ENCODE measurements at regions of chr2 and their contacts with region 1.

Region 1: GRCh38 chr2:9984217-9984739 is 32.8 kb downstream of the GRHL1 start:
- DNase-seq: no peak
- H3K4me3 Mint-ChIP-seq: no peak overlapping the region
- H3K27ac Mint-ChIP-seq: no peak overlapping the region
- H3K4me1 Mint-ChIP-seq: peaks cover 16% of the 10 kb centered on the region
- H3K27me3 Mint-ChIP-seq: peaks cover 13% of the 10 kb centered on the region

Region 2: GRCh38 chr2:9799665-9800632 is 184.3 kb before region 1 on chr2:
- CTCF ChIA-PET with region 1: interaction called, 13 read pairs
- POLR2A ChIA-PET with region 1: no interaction called
- DNase-seq: peak; percentile 92
- H3K4me3 Mint-ChIP-seq: peak overlapping the region; percentile 72
- H3K27ac Mint-ChIP-seq: peak overlapping the region; percentile 98
- H3K4me1 Mint-ChIP-seq: peaks cover 49% of the 10 kb centered on the region
- H3K27me3 Mint-ChIP-seq: no peaks in the 10 kb centered on the region

Region 3: DNA sequence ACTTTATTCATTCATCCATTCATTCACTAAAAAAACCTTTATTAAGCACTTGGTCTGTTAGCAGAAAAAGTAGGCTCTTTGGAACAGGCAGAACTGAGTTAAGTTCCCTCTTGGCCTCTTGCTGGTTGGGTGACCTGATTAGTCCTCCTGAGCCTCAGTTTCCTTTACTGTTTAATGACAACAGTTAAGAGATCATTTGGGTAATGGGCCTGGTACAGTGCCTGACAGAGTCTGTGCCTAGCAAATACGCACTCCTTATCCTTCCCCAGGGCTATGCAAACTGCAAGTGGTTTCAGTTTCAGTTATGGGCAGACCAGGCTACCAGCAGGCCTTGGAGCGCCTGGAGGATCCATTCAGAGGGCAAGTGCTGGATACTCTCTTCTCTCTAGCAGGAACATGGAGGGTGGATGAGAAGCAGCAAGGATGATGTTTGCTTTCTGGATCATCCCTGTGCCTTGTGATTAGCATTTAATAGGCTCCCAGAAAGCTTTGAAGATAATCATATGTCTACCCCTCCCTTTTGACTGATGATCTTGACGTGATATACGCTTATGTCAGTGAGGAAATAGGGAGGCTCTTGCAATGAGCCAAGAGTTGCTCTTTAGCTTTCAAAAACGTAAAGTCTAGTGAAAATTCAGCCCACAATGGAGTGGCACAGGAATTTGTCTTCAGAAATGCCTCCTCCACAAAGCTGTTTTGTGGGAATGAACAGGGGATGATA is 153.4 kb before region 1 on chr2:
- CTCF ChIA-PET with region 1: no interaction called
- POLR2A ChIA-PET with region 1: no interaction called
- DNase-seq: peak; percentile 37
- H3K4me3 Mint-ChIP-seq: no peak overlapping the region
- H3K27ac Mint-ChIP-seq: peak overlapping the region; percentile 22
- H3K4me1 Mint-ChIP-seq: peaks cover 38% of the 10 kb centered on the region
- H3K27me3 Mint-ChIP-seq: peaks cover 28% of the 10 kb centered on the region

Region 4: DNA sequence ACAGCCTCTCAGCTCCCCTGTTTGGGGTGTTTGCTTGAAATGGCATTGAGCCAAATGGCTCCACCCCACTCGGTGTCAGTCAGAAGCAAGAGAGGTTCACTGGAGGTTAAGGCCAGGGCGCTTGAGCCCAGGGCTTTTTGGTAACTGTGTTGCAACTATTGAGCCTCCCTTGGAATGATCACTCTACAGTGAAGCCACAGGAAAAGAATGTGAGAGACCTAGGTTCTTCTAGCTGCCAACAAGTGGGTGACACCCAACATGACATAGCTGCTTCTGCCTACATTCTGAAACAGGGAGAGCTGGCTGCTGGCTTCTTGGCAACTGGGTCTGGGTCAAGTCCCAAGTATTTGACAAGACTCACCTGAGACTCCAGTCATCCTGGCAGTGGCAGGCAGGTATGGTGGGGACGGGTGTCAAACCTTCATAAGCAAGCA is 39.9 kb before region 1 on chr2:
- CTCF ChIA-PET with region 1: interaction called, 15 read pairs
- POLR2A ChIA-PET with region 1: no interaction called
- DNase-seq: no peak
- H3K4me3 Mint-ChIP-seq: no peak overlapping the region
- H3K27ac Mint-ChIP-seq: no peak overlapping the region
- H3K4me1 Mint-ChIP-seq: peaks cover 5% of the 10 kb centered on the region
- H3K27me3 Mint-ChIP-seq: peaks cover 37% of the 10 kb centered on the region

Region 5: DNA sequence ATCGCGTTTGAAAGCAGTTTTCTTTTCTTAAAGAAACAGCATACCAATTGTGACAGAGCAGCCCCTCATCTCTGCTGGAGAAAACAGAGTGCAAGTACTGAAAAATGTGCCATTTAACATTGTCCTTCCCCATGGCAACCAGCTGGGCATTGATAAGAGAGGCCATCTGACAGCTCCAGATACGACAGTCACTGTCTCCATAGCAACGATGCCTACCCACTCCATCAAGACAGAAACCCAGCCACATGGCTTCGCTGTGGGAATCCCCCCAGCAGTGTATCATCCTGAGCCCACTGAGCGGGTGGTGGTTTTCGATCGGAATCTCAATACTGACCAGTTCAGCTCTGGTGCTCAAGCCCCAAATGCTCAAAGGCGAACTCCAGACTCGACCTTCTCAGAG is 23.3 kb before region 1 on chr2:
- CTCF ChIA-PET with region 1: interaction called, 28 read pairs
- POLR2A ChIA-PET with region 1: no interaction called
- DNase-seq: no peak
- H3K4me3 Mint-ChIP-seq: no peak overlapping the region
- H3K27ac Mint-ChIP-seq: no peak overlapping the region
- H3K4me1 Mint-ChIP-seq: peaks cover 19% of the 10 kb centered on the region
- H3K27me3 Mint-ChIP-seq: peaks cover 10% of the 10 kb centered on the region

Region 6: DNA sequence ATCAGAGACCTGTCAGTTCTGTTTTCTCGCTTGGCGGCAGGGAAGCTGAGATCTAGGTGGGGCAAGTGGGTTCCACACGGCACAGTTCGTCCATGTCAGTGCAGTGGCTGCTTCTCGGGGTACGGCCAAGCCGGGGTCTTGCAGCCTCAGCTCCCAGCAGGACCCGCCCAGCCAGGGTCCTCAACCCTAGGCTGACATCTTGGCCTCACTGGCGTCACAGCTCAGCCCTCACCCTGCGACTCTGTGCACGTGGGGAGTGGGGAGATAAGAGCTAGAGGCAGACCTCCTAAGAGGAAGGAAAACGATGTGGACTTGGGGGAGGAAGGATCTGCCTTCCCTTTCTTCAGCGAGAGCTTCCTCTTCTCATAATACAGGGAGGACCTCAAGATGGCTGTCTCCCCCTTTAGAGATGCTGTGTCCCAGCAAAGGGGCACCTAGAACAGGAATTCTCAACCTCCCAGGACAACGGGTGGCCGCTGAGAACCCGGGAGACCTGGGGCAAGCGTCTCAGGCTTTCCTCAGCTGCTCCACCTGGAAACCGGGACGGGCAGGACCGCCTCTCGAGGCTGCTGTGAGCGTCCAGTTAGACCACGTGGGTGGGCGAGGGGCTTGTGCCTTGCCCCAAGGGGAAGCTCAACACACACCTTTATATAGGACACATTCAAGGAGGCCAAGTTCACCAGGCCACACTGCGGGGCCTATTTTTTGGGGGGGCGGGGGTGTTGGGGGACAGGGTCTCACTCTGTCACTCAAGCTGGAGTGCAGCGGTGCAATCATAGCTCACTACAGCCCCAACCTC is 35.5 kb after region 1 on chr2:
- CTCF ChIA-PET with region 1: interaction called, 13 read pairs
- POLR2A ChIA-PET with region 1: interaction called, 3 read pairs
- DNase-seq: no peak
- H3K4me3 Mint-ChIP-seq: no peak overlapping the region
- H3K27ac Mint-ChIP-seq: no peak overlapping the region
- H3K4me1 Mint-ChIP-seq: no peaks in the 10 kb centered on the region
- H3K27me3 Mint-ChIP-seq: peaks cover 21% of the 10 kb centered on the region

Region 7: GRCh38 chr2:10036095-10036884 is 52.0 kb after region 1 on chr2:
- CTCF ChIA-PET with region 1: interaction called, 52 read pairs
- POLR2A ChIA-PET with region 1: interaction called, 3 read pairs
- DNase-seq: peak; percentile 42
- H3K4me3 Mint-ChIP-seq: no peak overlapping the region
- H3K27ac Mint-ChIP-seq: peak overlapping the region; percentile 10
- H3K4me1 Mint-ChIP-seq: peaks cover 32% of the 10 kb centered on the region
- H3K27me3 Mint-ChIP-seq: peaks cover 16% of the 10 kb centered on the region

Region 8: DNA sequence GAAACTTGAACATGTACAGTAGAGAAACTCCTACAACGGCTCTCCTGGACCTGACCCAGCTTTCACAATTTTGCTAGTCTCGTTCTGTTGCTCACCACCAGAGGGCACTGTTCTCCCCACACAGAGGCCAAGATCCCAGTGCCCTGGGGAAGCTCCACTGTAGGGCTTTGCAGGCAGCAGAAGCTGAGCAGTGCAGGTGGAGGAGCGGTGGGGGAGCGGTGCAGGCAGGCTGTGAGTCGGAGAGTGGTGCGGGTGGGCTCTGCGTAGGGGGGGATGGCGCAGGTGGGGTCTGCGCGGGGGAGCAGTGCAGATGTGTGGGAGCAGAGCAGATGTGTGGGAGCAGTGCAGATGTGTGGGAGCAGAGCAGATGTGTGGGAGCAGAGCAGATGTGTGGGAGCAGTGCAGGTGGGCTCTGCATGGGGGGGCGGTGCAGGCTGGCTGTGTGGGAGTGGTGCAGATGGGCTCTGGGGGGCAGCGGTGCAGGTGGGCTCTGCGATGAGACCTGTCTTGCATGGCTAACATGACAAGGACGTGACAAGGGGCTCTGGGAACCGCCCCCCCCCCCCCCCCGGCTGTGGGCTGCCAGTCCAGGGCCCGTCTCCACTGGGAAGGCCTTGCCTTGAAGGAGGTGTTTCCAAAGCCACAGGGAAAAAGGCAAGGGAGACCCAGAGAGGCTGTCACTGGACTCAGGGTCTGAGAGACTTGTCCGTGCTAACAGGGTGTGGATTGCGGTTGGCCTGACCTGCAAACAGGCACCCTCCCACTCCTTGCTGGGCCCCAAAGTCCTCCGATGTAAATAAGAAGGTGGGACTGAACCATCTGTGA is 88.6 kb after region 1 on chr2:
- CTCF ChIA-PET with region 1: interaction called, 16 read pairs
- POLR2A ChIA-PET with region 1: no interaction called
- DNase-seq: peak; percentile 84
- H3K4me3 Mint-ChIP-seq: no peak overlapping the region
- H3K27ac Mint-ChIP-seq: no peak overlapping the region
- H3K4me1 Mint-ChIP-seq: peaks cover 7% of the 10 kb centered on the region
- H3K27me3 Mint-ChIP-seq: peaks cover 49% of the 10 kb centered on the region

Region 9: GRCh38 chr2:10254373-10255151 is 270.3 kb after region 1 on chr2:
- CTCF ChIA-PET with region 1: no interaction called
- POLR2A ChIA-PET with region 1: no interaction called
- DNase-seq: no peak
- H3K4me3 Mint-ChIP-seq: no peak overlapping the region
- H3K27ac Mint-ChIP-seq: no peak overlapping the region
- H3K4me1 Mint-ChIP-seq: peaks cover 10% of the 10 kb centered on the region
- H3K27me3 Mint-ChIP-seq: peaks cover 27% of the 10 kb centered on the region

Region 10: DNA sequence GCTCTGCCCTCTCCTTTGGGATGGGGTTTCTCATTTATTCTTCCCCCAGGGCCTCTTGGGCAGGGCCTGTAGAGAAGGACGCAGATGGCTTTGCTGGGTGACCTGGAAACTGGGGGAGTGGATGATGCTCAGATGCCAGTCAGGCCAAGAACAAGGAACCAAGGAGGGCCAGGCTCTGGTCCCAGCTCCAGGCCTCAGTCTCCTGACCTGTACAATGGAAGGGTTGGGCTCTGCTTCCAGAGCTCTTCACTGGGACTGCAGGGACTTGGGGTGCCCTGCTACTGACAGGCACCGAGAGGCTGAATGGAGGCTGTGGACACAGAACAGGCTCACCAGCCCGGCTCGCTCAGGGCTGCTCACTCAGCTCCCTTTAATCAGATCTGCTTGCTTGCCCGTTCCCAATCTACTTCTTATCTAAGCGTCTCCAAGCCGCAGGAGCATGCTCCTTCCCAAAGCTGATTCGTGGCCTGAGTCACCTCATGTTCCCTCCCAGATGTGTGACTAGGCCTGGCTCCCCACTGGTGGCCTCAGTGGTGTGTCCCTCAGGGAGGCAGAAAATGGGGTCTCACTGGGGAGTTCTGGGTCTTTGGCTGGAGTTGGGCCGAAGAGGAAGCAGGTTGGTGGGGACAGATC is 546.4 kb after region 1 on chr2:
- CTCF ChIA-PET with region 1: no interaction called
- POLR2A ChIA-PET with region 1: no interaction called
- DNase-seq: no peak
- H3K4me3 Mint-ChIP-seq: no peak overlapping the region
- H3K27ac Mint-ChIP-seq: no peak overlapping the region
- H3K4me1 Mint-ChIP-seq: no peaks in the 10 kb centered on the region
- H3K27me3 Mint-ChIP-seq: peaks cover 3% of the 10 kb centered on the region